Posterior cingulate gyrus (tissue), 11 donors: ENCODE measurements at regions of chr14 and their contacts with region 1.

Region 1: GRCh38 chr14:32252030-32252670 is 49.1 kb upstream of the RNU6-8 start:
- DNase-seq: peak in 5 of 10 donors; percentile 24 to 68 (median 46)

Region 2: GRCh38 chr14:31510222-31510621 is 741.9 kb before region 1 on chr14:
- intact Hi-C with region 1: loop called (anchors 2 kb)
- DNase-seq: no peak

Region 3: DNA sequence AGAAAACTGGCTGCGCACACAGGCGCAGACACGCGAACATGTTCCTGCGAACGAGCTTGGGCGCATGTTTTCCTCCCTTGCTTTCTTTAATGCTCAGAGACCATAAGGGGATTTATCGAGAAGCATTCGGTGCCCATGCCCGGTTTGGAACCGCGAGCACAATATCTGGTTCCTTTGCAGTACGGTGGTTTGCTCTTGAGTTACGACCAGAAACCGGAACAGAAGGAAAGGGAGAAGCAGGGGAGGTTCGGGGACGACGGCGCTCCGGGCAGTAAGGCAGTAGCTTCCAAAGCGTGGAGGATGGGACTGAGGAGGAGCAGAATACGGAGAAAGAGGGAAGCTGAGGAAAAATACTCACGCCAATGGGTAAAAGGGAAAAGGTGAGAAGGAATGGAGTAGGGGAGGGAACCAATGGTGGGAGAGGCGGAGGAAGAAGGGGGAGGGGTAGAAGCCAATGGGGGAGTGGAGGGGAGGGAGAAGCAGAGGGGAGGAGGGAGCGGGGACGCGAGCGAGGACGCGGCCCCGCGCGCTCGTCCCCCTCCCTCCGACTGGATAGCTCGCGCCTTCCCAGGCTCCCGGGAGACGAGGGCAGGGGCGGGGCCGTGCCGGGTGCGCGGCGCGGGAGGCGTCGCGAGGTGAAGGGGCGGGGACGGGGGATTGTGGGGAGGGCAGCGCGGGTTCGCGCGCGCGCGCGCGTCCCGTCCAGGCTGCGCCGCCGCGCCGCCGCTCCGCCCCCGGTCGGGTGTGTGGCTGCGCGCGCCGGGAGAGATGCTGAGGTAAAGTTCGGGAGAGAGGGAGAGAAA is 175.7 kb before region 1 on chr14:
- intact Hi-C with region 1: loop called (anchors 1 kb)
- DNase-seq: peak; percentile 87 to 99 (median 96)

Region 4: DNA sequence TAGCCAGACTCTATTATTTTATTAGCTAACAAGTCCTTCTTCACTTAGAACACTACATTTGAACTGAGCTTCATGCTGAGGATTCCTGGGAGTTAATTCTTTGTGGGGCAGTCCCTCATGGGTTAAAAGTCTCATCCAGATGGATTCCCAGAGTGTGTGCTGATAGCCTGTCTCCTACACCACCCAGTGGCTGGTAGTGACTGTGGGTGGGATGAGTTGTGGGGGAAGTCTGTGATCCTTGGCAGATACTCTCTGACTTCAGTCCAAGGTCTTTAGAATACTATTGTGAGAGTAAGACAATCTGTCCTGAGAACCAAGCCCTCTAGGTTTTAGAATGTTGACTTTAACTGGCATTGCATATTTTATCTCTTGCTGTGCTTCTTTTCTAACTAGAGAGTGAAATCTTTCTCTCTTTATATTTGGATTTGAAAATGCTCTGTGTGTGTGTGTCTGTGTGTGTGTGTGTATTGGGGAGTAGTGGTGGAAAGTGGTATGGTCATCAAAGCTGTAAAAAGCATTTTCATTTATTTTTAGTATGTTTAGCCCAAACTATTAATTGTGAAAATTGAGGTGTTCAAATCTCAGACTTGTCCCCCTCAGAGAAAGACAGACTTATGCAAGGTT is 114.2 kb after region 1 on chr14:
- intact Hi-C with region 1: loop called (anchors 2 kb)
- DNase-seq: peak in 9 of 10 donors; percentile 32 to 90 (median 55)

Region 5: GRCh38 chr14:32560209-32560857 is 308.2 kb after region 1 on chr14:
- intact Hi-C with region 1: loop called (anchors 5 kb)
- DNase-seq: peak in 7 of 10 donors; percentile 26 to 80 (median 61)